ENCODE measurements at regions of chr19 and their contacts with region 1.

Region 1: DNA sequence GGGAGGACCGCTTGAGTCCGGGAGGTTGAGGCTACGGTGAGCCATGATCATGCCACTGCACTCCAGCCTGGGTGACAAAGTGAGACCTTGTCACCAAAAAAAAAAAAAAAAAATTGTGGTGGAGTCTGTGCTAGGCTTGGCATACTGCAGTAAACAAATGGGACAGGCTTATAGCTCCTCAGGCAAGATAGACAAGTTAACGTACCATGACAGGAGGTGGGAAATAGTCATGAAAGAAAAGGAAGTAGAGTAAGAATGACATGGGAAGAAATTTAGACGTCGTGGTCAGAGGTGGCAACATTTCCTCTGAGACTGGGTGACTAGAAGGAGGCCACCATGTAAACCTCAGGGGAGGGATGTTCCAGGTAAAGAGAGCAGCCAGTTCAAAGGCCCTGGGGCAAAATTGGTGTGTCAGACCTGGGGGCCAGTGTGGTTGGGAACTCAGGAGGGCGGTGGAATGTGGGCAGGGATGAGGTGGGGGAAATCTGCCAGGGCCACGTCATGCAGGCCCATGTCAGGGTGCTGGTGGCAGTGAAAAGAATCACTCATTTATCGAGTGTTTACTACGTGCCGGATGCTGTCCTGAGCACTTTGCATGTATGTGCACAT is 5.6 kb downstream of the SNRPA start:
- DNase-seq: peak; percentile 62
- ATAC-seq: peak; percentile 28
- H3K4me3 Mint-ChIP-seq: peak overlapping the region; percentile 18
- H3K27ac Mint-ChIP-seq: peak overlapping the region; percentile 69
- H3K4me1 Mint-ChIP-seq: peaks cover 58% of the 10 kb centered on the region
- H3K27me3 Mint-ChIP-seq: no peaks in the 10 kb centered on the region

Region 2: GRCh38 chr19:40598121-40598917 is 158.3 kb before region 1 on chr19:
- CTCF ChIA-PET with region 1: no interaction called
- POLR2A ChIA-PET with region 1: no interaction called
- intact Hi-C with region 1: no loop called
- DNase-seq: peak; percentile 92
- ATAC-seq: peak; percentile 71
- H3K4me3 Mint-ChIP-seq: peak overlapping the region; percentile 23
- H3K27ac Mint-ChIP-seq: no peak overlapping the region
- H3K4me1 Mint-ChIP-seq: peaks cover 50% of the 10 kb centered on the region
- H3K27me3 Mint-ChIP-seq: peaks cover 34% of the 10 kb centered on the region

Region 3: DNA sequence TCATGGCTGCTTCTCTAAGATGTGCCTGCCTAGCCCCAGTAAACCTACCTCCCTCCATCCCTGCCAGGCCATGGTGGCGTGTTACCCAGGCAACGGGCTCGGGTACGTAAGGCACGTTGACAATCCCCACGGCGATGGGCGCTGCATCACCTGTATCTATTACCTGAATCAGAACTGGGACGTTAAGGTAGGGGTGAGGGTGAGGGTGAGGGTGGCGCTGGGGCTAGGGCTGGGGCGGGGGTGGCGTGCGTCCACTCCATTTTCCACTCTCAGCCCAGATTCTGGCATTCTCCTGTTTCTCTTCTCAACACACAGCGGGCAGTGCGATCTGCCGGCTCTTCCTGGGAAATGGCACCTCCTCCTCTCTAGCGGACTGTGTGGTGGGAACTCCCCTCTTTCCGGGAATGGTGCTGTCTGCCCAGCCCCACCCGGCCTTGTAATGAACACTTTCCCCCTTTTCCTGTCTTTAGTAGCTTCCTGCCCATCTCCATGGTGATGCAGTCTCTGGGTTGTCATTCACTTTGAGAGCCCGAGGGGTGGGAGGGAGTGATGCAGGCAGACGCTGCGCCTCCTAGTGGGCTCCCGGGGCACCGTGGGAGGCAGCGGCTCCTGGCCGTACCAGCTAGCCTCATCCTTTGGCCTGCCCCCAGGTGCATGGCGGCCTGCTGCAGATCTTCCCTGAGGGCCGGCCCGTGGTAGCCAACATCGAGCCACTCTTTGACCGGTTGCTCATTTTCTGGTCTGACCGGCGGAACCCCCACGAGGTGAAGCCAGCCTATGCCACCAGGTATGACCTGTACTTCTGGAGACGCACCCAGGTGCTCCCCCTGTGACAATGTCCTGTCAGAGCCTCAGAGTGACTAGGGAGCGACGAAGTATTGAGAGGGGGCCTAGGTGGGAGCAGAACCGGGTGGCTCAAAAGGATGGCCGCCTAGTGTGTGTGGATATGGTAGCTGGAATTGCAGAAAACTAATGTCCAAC is 50.2 kb after region 1 on chr19:
- CTCF ChIA-PET with region 1: interaction called, 11 read pairs
- POLR2A ChIA-PET with region 1: interaction called, 3 read pairs
- intact Hi-C with region 1: loop called in 1 of 2 experiments (anchors 2 kb)
- DNase-seq: peak; percentile 90
- ATAC-seq: peak; percentile 51
- H3K4me3 Mint-ChIP-seq: peak overlapping the region; percentile 55
- H3K27ac Mint-ChIP-seq: peak overlapping the region; percentile 89
- H3K4me1 Mint-ChIP-seq: peaks cover 72% of the 10 kb centered on the region
- H3K27me3 Mint-ChIP-seq: no peaks in the 10 kb centered on the region

Region 4: DNA sequence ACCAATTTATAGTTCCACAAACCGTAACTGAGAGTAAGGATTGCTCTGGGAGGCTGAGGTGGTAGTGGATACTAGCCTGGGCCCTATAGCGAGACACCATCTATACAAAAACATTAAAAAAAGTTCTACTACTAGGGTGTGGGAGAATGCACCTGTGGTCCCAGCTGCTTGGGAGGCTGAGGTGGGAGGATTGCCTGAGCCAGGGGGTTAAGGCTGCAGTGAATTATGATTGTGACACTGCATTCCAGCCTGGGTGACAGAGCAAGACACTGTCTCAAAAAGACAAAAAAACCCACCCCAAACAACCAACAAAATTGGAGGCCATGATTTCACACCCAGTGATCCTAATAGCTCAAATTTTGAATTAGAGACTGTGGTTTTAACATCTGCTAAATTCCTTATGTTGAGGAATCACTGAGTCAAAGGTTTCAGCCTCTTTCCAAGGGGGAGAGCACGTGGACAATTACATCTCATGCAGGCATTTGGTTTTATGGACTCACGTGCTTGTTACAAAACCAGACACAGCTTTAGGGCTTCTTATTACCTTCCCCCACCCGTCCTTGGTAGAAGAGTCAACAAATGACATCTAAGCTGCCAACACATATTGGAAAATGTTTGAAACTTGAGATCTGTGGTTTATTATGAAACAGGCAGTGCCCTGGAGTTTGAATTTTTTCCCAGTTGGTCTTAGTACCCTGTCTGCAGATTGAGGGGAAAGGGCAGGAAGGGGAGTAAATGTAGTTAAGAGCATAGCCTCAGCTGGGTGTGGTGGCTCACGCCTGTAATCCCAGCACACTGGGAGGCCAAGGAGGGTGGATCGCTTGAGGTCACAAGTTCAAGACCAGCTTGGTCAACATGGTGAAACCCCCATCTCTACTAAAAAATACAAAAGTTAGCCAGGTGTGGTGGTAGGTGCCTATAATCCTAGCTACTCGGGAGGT is 75.2 kb after region 1 on chr19:
- CTCF ChIA-PET with region 1: no interaction called
- POLR2A ChIA-PET with region 1: no interaction called
- intact Hi-C with region 1: no loop called
- DNase-seq: no peak
- ATAC-seq: no peak
- H3K4me3 Mint-ChIP-seq: no peak overlapping the region
- H3K27ac Mint-ChIP-seq: no peak overlapping the region
- H3K4me1 Mint-ChIP-seq: peaks cover 19% of the 10 kb centered on the region
- H3K27me3 Mint-ChIP-seq: no peaks in the 10 kb centered on the region

Measured in activated CD4-positive, alpha-beta T cell treated with anti-CD3 and anti-CD28 coated beads for 36 hours (primary cell).